ENCODE measurements at regions of chr17 and their contacts with region 1.

Region 1: GRCh38 chr17:75549221-75550138 is 24.0 kb downstream of the LLGL2 start:
- DNase-seq: no peak
- ATAC-seq: no peak
- H3K4me3 Mint-ChIP-seq: no peak overlapping the region
- H3K27ac Mint-ChIP-seq: no peak overlapping the region
- H3K4me1 Mint-ChIP-seq: no peaks in the 10 kb centered on the region
- H3K27me3 Mint-ChIP-seq: no peaks in the 10 kb centered on the region

Region 2: GRCh38 chr17:75515496-75516254 is 33.8 kb before region 1 on chr17 and contains the start of gene CASKIN2:
- CTCF ChIA-PET with region 1: no interaction called
- POLR2A ChIA-PET with region 1: no interaction called
- intact Hi-C with region 1: no loop called
- DNase-seq: peak; percentile 93
- ATAC-seq: peak; percentile 61
- H3K4me3 Mint-ChIP-seq: peak within 1 kb of the TSS; percentile 68
- H3K27ac Mint-ChIP-seq: no peak within 1 kb of the TSS
- H3K4me1 Mint-ChIP-seq: peaks cover 22% of the 10 kb centered on the region
- H3K27me3 Mint-ChIP-seq: peaks cover 3% of the 10 kb centered on the region
- total RNA-seq, gene CASKIN2: 2.9 to 3.0 TPM

Region 3: DNA sequence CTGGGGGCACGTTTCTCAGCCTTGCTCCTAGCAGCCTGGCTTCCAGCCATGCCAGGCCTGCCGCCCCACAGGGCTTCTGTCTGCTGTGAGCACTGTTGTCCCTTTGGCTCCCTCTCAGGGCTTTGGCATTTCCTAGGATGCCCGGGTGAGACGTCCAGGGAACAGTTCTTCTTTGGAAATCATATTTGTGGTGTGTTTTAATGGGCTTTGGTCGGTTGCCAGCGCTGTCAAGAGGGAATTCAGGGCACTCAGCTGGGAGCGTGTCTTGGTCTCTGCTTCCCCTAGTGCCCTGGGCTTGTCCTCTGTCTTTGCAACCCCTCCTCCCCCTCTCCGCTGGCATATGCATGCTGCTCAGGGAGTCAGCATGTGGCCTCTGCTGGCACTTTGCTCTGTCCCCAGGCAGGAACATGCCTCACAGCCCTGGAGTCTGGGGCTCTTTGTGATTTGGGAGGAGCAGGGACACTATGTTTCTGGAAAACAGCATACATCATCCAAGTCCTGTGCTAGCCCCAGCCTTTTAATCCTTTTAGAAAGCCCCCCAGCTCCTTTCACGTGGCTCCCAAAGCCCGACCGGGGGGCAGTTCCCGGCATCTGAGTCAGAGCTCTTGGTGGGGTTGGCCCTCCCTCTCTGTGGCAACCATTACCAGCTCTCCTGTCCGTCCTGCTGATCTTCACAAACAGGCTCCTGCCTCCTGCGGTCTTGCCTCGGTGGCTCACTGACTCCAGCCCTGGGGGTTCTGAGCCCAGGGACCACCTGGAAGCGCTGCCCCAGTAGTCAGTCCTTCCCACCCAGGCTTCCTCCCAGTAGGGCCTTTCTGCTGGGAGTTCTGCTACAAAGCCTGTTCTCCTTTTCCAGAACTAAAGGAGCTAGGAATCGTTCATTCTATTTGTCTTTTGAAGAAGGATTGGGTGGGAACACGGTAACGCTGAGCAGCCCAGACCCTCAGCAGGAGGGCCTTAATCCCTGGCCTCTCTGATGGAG is 144.3 kb after region 1 on chr17:
- CTCF ChIA-PET with region 1: no interaction called
- POLR2A ChIA-PET with region 1: no interaction called
- intact Hi-C with region 1: loop called in 1 of 2 experiments (anchors 5 kb)
- DNase-seq: no peak
- ATAC-seq: no peak
- H3K4me3 Mint-ChIP-seq: no peak overlapping the region
- H3K27ac Mint-ChIP-seq: no peak overlapping the region
- H3K4me1 Mint-ChIP-seq: peaks cover 35% of the 10 kb centered on the region
- H3K27me3 Mint-ChIP-seq: no peaks in the 10 kb centered on the region